ENCODE measurements at regions of chr19 and their contacts with region 1.

Region 1: GRCh38 chr19:42881229-42881628 is 1.7 kb upstream of the PSG1 start:
- DNase-seq: no peak
- H3K4me3 ChIP-seq: no peak overlapping the region
- H3K27ac ChIP-seq: no peak overlapping the region
- H3K4me1 ChIP-seq: peaks cover 7% of the 10 kb centered on the region
- H3K27me3 ChIP-seq: no peaks in the 10 kb centered on the region
- CTCF ChIP-seq: peak; percentile 51

Region 2: GRCh38 chr19:42693764-42694350 is 187.4 kb before region 1 on chr19:
- CTCF ChIA-PET with region 1: interaction called, 3 read pairs
- POLR2A ChIA-PET with region 1: no interaction called
- intact Hi-C with region 1: loop called (anchors 10 kb)
- DNase-seq: peak; percentile 37 to 60
- H3K4me3 ChIP-seq: no peak overlapping the region
- H3K27ac ChIP-seq: no peak overlapping the region
- H3K4me1 ChIP-seq: no peaks in the 10 kb centered on the region
- H3K27me3 ChIP-seq: peaks cover 44% of the 10 kb centered on the region; the same call in 1 of the 2 replicates
- CTCF ChIP-seq: peak; percentile 82

Region 3: GRCh38 chr19:42794765-42795164 is 86.5 kb before region 1 on chr19:
- CTCF ChIA-PET with region 1: no interaction called
- POLR2A ChIA-PET with region 1: no interaction called
- intact Hi-C with region 1: loop called (anchors 1 kb)
- DNase-seq: no peak
- H3K4me3 ChIP-seq: no peak overlapping the region
- H3K27ac ChIP-seq: no peak overlapping the region
- H3K4me1 ChIP-seq: 0 out of 2 replicates have a peak, but pooled peaks cover 3% of the 10 kb centered on the region
- H3K27me3 ChIP-seq: no peaks in the 10 kb centered on the region
- CTCF ChIP-seq: no peak

Region 4: DNA sequence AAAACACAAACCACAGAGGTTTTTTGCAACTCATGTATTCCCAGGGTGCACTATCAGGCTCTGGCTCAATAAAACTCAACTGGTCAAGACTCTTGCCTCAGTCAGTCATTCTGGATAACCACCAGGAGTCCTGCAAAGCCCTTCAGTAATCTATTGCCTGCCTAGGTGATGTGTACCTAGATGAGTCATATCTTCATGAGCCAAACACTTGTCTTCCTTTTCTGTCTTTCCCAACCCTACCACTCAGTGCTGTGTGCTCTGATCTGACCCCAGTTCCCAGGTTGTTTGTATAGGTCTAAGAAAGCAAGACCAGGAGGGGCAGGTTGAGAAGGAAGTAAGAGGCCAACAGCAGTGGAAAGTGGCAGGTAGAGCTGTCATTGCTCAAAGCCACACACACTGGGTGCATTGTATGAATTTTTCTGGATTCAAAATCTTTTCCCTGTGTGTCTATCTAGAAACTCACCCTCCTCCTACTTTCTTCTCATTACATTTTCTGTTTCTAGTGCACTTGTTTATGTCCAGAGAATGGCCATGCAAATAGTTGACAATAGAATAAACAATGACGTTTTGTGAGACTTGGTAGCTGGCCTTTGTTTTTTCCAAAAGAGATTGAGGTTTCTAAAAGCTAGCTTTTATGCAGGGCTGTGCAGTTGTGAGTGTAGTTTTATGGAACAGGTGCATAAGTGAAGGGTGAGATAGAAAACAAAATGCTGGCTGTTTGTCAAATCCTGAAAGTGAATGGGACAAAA is 49.8 kb before region 1 on chr19:
- CTCF ChIA-PET with region 1: no interaction called
- POLR2A ChIA-PET with region 1: interaction called, 16 read pairs
- intact Hi-C with region 1: no loop called
- DNase-seq: peak; percentile 63 to 98
- H3K4me3 ChIP-seq: no peak overlapping the region
- H3K27ac ChIP-seq: peak overlapping the region; percentile 98
- H3K4me1 ChIP-seq: peaks cover 37% of the 10 kb centered on the region
- H3K27me3 ChIP-seq: no peaks in the 10 kb centered on the region
- CTCF ChIP-seq: no peak; the same call in 1 of the 2 replicates

Region 5: DNA sequence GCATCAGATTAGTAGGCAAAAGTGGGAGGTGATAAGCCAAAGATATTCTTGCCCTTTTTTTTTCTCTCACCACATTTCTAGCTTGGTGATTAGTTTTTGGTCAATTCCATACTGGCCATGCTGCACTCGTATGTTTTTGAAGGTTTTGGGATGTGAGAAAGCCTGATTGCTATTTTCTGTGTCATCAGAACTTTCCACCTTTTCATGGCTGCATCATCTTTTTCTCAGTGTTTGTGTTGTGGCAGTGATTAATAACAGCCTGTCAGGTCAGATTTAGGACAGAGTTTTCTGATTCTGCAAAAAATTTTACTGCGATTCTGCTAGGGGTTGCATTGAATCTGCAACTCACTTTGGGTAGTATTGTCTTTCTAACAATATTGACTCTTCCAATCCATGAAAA is 34.6 kb before region 1 on chr19:
- CTCF ChIA-PET with region 1: no interaction called
- POLR2A ChIA-PET with region 1: no interaction called
- intact Hi-C with region 1: no loop called
- DNase-seq: no peak
- H3K4me3 ChIP-seq: no peak overlapping the region
- H3K27ac ChIP-seq: no peak overlapping the region
- H3K4me1 ChIP-seq: peaks cover 25% of the 10 kb centered on the region
- H3K27me3 ChIP-seq: no peaks in the 10 kb centered on the region
- CTCF ChIP-seq: no peak